ENCODE measurements at regions of chr1 and their contacts with region 1.

Region 1: DNA sequence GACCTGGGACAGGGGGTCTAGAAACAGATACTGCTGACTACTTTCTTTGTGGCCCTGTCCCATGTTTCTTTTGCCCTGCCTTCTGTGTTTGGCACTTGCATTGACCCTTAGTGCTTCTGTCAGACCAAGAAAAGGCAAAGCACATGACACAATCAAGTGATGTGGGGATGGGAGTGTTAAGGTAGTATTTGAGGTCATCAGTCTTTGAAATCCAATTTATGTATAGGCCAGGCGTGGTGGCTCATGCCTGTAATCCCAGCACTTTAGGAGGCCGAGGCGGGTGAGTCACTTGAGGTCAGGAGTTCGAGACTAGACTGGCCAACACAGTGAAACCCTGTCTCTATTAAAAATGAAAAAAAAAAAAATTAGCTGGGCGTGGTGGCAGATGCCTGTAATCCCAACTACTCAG is 26.0 kb downstream of the SERBP1 start:
- DNase-seq: no peak
- H3K4me3 Mint-ChIP-seq: no peak overlapping the region
- H3K27ac Mint-ChIP-seq: no peak overlapping the region
- H3K4me1 Mint-ChIP-seq: peaks cover 24% of the 10 kb centered on the region
- H3K27me3 Mint-ChIP-seq: no peaks in the 10 kb centered on the region

Region 2: GRCh38 chr1:67339623-67340343 is 64.4 kb before region 1 on chr1:
- intact Hi-C with region 1: no loop called
- DNase-seq: peak; percentile 47
- H3K4me3 Mint-ChIP-seq: peak overlapping the region; percentile 66
- H3K27ac Mint-ChIP-seq: peak overlapping the region; percentile 90
- H3K4me1 Mint-ChIP-seq: peaks cover 80% of the 10 kb centered on the region
- H3K27me3 Mint-ChIP-seq: no peaks in the 10 kb centered on the region

Region 3: DNA sequence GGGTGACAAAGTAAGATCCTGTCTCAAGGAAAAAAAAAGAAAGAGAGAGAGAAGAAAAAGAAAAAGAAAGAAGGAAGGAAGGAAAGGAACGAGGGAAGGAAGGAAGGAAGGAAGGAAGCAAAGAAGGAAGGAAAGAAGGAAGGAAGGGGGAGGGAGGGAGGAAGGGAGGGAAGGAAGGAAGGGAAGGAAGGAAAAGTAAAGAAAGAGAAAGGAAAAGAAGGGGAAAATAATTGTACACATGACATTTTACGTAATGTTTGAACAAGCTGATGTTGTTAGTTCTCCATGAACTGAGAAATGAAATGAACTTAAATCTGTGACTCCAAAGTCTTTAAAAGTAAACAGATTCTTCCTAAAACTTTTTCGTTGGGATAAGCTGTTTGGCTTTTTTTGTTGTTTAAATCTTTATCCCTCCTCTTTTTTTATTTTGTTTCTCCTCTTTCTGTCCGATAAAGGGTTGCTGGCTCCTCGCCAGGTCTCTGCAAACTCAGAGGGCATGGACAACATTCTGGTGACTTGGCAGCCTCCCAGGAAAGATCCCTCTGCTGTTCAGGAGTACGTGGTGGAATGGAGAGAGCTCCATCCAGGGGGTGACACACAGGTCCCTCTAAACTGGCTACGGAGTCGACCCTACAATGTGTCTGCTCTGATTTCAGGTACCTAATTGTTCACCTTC is 36.7 kb before region 1 on chr1:
- intact Hi-C with region 1: loop called (anchors 5 kb)
- DNase-seq: no peak
- H3K4me3 Mint-ChIP-seq: no peak overlapping the region
- H3K27ac Mint-ChIP-seq: peak overlapping the region; percentile 77
- H3K4me1 Mint-ChIP-seq: peaks cover 36% of the 10 kb centered on the region
- H3K27me3 Mint-ChIP-seq: no peaks in the 10 kb centered on the region

Region 4: GRCh38 chr1:67418839-67419586 is 14.8 kb after region 1 on chr1:
- intact Hi-C with region 1: no loop called
- DNase-seq: no peak
- H3K4me3 Mint-ChIP-seq: no peak overlapping the region
- H3K27ac Mint-ChIP-seq: peak overlapping the region; percentile 48
- H3K4me1 Mint-ChIP-seq: peaks cover 61% of the 10 kb centered on the region
- H3K27me3 Mint-ChIP-seq: no peaks in the 10 kb centered on the region

Region 5: DNA sequence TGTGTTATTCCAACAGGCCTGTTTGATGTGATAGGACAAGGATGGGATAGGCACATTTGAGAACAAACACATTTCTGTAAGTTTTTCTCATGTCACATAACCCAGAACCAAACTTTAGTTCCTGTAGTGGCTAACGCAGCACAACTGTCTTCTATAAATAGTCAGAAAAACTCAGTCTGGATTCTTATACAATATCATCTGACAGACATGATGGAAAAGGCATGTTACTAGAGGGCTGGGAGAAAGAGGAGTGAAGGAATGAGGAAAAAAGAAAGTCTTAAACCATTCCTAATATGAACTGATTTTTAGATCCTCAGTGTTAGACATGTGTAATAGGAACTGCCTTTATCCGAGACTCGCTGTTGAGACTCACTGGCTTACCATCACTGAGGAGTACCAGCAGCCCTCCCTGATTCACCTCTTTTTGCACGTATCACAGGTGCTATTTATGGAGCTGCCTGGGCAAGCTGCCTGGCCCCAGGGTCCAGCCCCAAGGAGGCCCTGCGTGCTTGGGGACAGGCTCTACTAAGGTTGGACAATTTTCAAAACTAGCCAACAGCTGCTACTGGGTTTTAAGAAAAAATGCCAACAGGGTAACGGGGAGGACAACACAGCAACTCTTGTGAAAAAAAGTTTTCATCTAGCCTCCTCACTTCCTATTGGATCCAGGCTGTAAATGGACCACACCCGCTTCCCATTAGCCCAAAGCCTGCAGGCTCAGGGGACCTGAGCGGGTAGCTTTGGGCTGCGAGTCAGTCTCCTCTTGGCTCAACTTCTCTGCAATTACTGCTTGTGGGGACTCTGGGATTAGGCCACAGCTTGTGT is 56.7 kb after region 1 on chr1:
- intact Hi-C with region 1: no loop called
- DNase-seq: no peak
- H3K4me3 Mint-ChIP-seq: no peak overlapping the region
- H3K27ac Mint-ChIP-seq: no peak overlapping the region
- H3K4me1 Mint-ChIP-seq: no peaks in the 10 kb centered on the region
- H3K27me3 Mint-ChIP-seq: peaks cover 9% of the 10 kb centered on the region

Measured in activated T-helper 1 cell treated with anti-CD3 and anti-CD28 coated beads, Interleukin-12 subunit alpha, Interleukin-12 subunit beta, Interleukin-2, Interleukin-4 antibody, amounts not matched to agents 30 ng/mL and 10 ng/mL and 1 ng/mL, durations not matched to agents 14 hours and 24 hours and 36 hours (primary cell).